Heart right ventricle (tissue), 16 donors: ENCODE measurements at regions of chr11 and their contacts with region 1.

Region 1: GRCh38 chr11:46006418-46007070 is 84.1 kb downstream of the LARGE2 start:
- DNase-seq: peak in 1 of 2 donors; percentile 47
- ATAC-seq: peak in 6 of 8 donors; percentile 54 to 83 (median 78)
- H3K4me3 ChIP-seq: no peak overlapping the region
- H3K27ac ChIP-seq: no peak overlapping the region
- H3K4me1 ChIP-seq: peaks cover 0 to 42% (median 23%) of the 10 kb centered on the region in 9 donors
- H3K27me3 ChIP-seq: no peaks in the 10 kb centered on the region
- CTCF ChIP-seq: peak; percentile 60 to 88 (median 79)

Region 2: GRCh38 chr11:45834298-45834756 is 172.2 kb before region 1 on chr11:
- intact Hi-C with region 1: no loop called
- DNase-seq: no peak
- ATAC-seq: peak in 3 of 8 donors; percentile 20 to 55 (median 33)
- H3K4me3 ChIP-seq: no peak overlapping the region
- H3K27ac ChIP-seq: no peak overlapping the region
- H3K4me1 ChIP-seq: peaks cover 0 to 4% (median 0%) of the 10 kb centered on the region in 9 donors
- H3K27me3 ChIP-seq: peaks cover 0 to 3% (median 0%) of the 10 kb centered on the region in 7 donors
- CTCF ChIP-seq: no peak

Region 3: GRCh38 chr11:45859661-45860140 is 146.8 kb before region 1 on chr11:
- intact Hi-C with region 1: loop called in 1 of 10 experiments (anchors 10 kb)
- DNase-seq: peak; percentile 93 to 94
- ATAC-seq: peak; percentile 81 to 89 (median 86)
- H3K4me3 ChIP-seq: peak overlapping the region in 1 of 10 donors; percentile 6
- H3K27ac ChIP-seq: peak overlapping the region; percentile 68 to 99 (median 90)
- H3K4me1 ChIP-seq: peaks cover 35 to 90% (median 65%) of the 10 kb centered on the region in 9 donors
- H3K27me3 ChIP-seq: no peaks in the 10 kb centered on the region
- CTCF ChIP-seq: no peak

Region 4: DNA sequence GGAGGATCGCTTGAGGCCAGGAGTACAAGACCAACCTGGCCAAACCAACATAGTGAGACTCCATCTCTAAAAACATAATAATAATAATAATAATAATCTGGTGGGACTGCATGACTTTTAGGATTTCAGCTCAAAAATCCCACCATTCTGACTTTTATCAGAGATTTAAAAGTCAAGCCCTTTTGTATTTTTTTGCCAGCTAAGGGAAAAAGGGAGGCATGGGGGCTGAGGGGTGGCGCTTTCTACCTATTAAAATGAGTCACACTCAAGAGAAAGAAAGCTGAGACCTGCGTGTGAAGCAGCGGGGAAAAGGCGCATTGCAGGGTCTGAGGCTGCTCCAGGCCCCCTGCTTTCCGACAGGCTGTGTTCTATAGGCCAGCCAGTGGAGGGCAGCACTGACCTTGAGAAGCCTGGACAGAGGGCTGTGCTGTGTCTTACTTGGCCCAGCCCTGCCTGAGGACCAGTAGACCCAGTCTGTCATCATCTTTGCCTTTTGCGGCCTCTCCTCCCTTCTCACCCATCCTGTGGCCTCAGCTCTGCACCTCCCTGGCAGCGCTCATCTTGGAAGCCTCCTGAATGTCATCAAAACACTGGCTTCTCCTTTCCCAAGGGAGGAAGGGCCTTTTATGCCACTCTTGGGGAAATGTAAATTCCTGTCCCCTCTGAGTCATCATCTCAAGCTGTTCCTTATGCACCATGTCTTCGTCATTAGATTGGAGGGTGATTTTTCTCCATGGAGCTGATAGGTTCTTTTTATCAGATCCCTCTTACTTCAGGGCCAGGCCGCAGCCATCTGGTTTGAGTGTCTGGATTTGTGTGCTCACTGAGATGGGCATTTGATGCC is 133.8 kb before region 1 on chr11:
- intact Hi-C with region 1: loop called in 5 of 10 experiments (anchors 10 kb)
- DNase-seq: peak in 1 of 2 donors; percentile 31
- ATAC-seq: peak; percentile 63 to 77 (median 70)
- H3K4me3 ChIP-seq: no peak overlapping the region
- H3K27ac ChIP-seq: no peak overlapping the region
- H3K4me1 ChIP-seq: peaks cover 0 to 11% (median 0%) of the 10 kb centered on the region in 9 donors
- H3K27me3 ChIP-seq: no peaks in the 10 kb centered on the region
- CTCF ChIP-seq: peak; percentile 30 to 73 (median 66)